ENCODE measurements at regions of chr6 and their contacts with region 1.

Region 1: DNA sequence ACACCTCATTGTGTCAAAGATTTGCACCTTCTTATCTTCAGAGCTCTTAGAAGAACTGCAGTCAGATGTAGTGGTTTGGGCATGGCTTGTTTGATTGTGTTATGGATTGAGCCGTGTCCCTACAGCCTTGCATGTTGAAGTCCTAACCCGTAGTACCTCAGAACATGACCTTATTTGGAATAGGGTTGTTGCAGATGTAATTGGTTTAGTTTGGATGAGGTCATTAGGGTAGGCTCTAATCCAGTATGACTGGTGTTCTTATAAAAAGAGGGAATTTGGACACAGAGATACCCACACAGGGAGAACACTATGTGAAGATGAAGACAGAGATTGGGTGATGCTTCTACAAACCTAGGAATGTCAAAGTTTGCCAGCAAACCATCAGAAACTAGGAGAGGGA is 35.4 kb upstream of the PHACTR2 start:
- DNase-seq: no peak
- ATAC-seq: no peak
- H3K4me3 ChIP-seq: no peak overlapping the region
- H3K27ac ChIP-seq: no peak overlapping the region
- H3K4me1 ChIP-seq: no peaks in the 10 kb centered on the region
- H3K27me3 ChIP-seq: no peaks in the 10 kb centered on the region
- CTCF ChIP-seq: no peak
- POLR2A ChIP-seq: no peak
- RAD21 ChIP-seq: no peak

Region 2: GRCh38 chr6:142913511-142914047 is 728.8 kb before region 1 on chr6:
- CTCF ChIA-PET with region 1: no interaction called
- POLR2A ChIA-PET with region 1: no interaction called
- dilution Hi-C with region 1: no loop called
- in situ Hi-C with region 1: no loop called
- intact Hi-C with region 1: no loop called
- DNase-seq: no peak
- ATAC-seq: no peak
- H3K4me3 ChIP-seq: no peak overlapping the region
- H3K27ac ChIP-seq: no peak overlapping the region
- H3K4me1 ChIP-seq: peaks cover 2% of the 10 kb centered on the region
- H3K27me3 ChIP-seq: no peaks in the 10 kb centered on the region
- CTCF ChIP-seq: no peak
- POLR2A ChIP-seq: no peak
- RAD21 ChIP-seq: no peak

Region 3: DNA sequence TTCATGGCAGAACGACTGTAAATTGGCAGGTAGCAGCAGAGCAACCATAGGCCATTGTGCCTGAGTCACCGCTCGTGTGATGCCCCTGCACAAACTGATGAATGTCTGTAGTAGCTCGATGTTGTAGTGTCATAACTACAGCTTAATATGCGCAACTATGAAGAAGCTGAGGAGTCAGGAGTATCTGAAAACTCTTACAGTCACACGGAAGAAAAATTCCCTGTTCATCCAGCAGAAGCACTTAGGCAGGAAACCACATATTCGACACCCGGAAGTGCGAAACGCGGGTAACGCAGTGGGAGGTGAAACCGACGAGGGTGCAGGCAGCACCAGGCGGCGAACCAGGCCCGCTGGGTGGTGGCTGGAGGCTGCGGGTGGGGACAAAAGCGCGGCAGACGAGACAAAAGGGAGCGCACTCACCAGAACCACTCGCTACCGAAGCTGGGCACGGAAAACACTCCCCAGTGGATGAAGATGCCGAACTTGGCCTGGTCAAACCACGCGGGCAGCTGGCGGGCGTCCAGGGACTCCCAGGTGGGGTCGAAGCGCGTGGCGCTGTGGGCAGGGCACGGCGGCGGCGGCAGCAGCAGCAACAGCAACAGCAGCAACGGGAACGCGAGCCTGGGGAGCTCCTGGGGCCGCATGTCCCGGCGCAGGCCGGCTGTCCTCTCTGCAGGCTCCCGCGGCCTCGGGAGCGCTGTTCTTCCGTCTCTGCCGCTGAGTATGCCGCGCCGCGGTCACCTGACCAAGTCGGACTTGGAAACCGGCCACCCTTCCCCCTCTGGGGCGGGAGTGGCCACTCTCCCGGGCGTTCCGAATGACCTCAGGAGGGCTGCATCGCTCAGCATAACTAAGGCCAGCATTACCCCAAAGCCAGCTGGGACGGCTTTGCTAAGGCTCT is 131.2 kb before region 1 on chr6 and contains the start of gene FUCA2:
- CTCF ChIA-PET with region 1: no interaction called
- POLR2A ChIA-PET with region 1: no interaction called
- dilution Hi-C with region 1: no loop called
- in situ Hi-C with region 1: no loop called
- intact Hi-C with region 1: no loop called
- DNase-seq: peak; percentile 87
- ATAC-seq: peak; percentile 90
- H3K4me3 ChIP-seq: peak within 1 kb of the TSS; percentile 54
- H3K27ac ChIP-seq: peak within 1 kb of the TSS; percentile 85
- H3K4me1 ChIP-seq: peaks cover 7% of the 10 kb centered on the region
- H3K27me3 ChIP-seq: peaks cover 4% of the 10 kb centered on the region; the same call in 1 of the 2 replicates
- CTCF ChIP-seq: 0 out of 2 replicates have a peak, but pooled peaks have one; percentile 4
- POLR2A ChIP-seq: peak; percentile 78
- RAD21 ChIP-seq: no peak
- total RNA-seq, gene FUCA2: 44.1 and 52.5 TPM in 2 replicates

Region 4: DNA sequence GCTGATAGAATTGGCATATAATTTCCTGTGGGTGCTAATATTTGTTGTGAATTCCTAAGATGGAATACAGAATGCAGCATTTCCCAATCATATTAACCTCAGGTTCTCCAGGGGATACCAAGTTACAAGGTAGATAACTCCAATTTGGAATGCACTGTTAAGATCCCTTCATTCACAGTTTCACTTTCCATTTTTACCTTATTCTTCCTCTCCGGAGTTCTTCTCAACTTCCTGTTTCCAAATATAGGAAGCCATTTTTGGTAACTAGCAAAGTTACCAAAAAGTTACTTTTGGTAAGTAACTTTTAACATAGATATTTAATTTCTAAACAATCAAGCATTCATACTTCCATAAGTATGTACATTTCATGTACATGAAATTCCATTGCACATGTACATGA is 28.2 kb before region 1 on chr6:
- CTCF ChIA-PET with region 1: no interaction called
- POLR2A ChIA-PET with region 1: no interaction called
- dilution Hi-C with region 1: no loop called
- in situ Hi-C with region 1: no loop called
- intact Hi-C with region 1: loop called (anchors 1 kb)
- DNase-seq: no peak
- ATAC-seq: no peak
- H3K4me3 ChIP-seq: no peak overlapping the region
- H3K27ac ChIP-seq: no peak overlapping the region
- H3K4me1 ChIP-seq: 0 out of 2 replicates have a peak, but pooled peaks cover 2% of the 10 kb centered on the region
- H3K27me3 ChIP-seq: no peaks in the 10 kb centered on the region
- CTCF ChIP-seq: no peak
- POLR2A ChIP-seq: no peak
- RAD21 ChIP-seq: no peak

Region 5: GRCh38 chr6:143901885-143902750 is 259.7 kb after region 1 on chr6:
- CTCF ChIA-PET with region 1: no interaction called
- POLR2A ChIA-PET with region 1: no interaction called
- dilution Hi-C with region 1: no loop called
- in situ Hi-C with region 1: no loop called
- intact Hi-C with region 1: no loop called
- DNase-seq: peak; percentile 49
- ATAC-seq: peak; percentile 89
- H3K4me3 ChIP-seq: no peak overlapping the region
- H3K27ac ChIP-seq: peak overlapping the region; percentile 57; the same call in 1 of the 2 replicates
- H3K4me1 ChIP-seq: peaks cover 7% of the 10 kb centered on the region
- H3K27me3 ChIP-seq: no peaks in the 10 kb centered on the region
- CTCF ChIP-seq: no peak
- POLR2A ChIP-seq: no peak
- RAD21 ChIP-seq: no peak

Measured in IMR-90 (cell line).